GM10248 (cell line): ENCODE measurements at regions of chr9 and their contacts with region 1.

Region 1: DNA sequence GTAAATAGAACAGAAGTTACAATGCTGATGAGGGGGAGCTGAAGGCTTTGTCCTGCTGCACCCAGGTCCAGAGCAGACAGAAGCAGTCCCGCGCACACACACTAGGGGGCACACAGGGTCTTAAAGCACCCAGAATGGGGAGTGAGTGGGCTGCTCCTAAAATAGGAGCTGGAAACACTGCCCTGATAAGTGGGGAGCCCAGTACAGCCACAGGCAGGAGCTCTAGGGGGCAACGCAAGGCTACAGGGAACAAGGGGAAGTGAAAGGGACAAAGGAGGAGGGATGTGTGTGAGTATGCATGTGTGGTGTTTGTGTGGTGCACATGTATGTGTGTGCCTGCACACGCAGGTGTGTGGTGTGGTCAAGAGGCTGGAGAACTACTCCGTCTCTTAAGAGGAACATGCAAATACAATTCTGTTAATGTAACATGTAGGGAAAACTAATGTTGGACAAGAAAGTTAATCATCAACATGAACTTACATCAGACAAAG is 191.5 kb downstream of the ROR2 start:
- DNase-seq: peak; percentile 65
- CTCF ChIP-seq: peak; percentile 49

Region 2: DNA sequence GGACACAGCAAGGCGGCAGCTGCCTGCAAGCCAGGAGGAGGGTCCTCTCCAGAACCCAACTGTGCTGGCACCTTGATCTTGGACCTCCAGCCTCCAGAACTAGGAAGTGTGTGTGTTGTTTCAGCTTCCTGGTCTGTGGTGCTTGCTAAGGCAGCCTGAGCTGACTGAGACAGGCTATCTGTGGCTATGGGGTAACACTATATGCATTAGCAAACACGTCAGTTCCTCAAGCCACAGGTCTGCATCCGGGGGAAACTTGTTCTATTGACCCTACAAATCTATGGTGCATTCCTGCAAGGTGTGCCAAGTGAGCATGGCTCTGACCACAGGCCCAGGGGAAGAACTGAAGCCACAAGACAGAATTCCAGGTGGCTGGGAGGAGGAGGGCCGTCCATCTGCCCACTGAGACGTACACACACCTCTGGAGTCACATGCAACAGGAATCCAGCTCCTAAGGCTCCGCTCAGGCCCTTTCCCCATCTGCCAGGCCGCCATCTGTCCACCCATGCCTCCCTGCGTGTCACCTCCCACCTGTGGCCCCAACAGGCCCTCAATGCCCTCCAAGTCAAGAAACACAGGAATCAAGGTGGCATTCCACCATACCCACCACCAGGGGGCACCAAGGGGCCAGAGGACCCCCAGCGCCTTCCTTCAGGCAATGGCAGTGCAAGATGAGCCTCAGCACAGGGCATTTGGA is 16.6 kb after region 1 on chr9:
- CTCF ChIA-PET with region 1: interaction called, 11 read pairs
- POLR2A ChIA-PET with region 1: no interaction called
- DNase-seq: peak; percentile 83
- CTCF ChIP-seq: peak; percentile 86

Region 3: GRCh38 chr9:91884696-91885687 is 126.5 kb after region 1 on chr9:
- CTCF ChIA-PET with region 1: no interaction called
- POLR2A ChIA-PET with region 1: no interaction called
- DNase-seq: no peak
- CTCF ChIP-seq: no peak